PC-3 (cell line): ENCODE measurements at regions of chr14 and their contacts with region 1.

Region 1: GRCh38 chr14:54867011-54867410 is 35.6 kb downstream of the GCH1 start:
- DNase-seq: no peak
- ATAC-seq: no peak
- H3K4me3 ChIP-seq: no peak overlapping the region
- H3K27ac ChIP-seq: no peak overlapping the region
- H3K4me1 ChIP-seq: peaks cover 14% of the 10 kb centered on the region
- H3K27me3 ChIP-seq: no peaks in the 10 kb centered on the region
- CTCF ChIP-seq: no peak

Region 2: GRCh38 chr14:54893151-54893760 is 26.2 kb after region 1 on chr14:
- CTCF ChIA-PET with region 1: no interaction called
- POLR2A ChIA-PET with region 1: no interaction called
- intact Hi-C with region 1: loop called (anchors 1 kb)
- DNase-seq: peak; percentile 99
- ATAC-seq: peak; percentile 65
- H3K4me3 ChIP-seq: no peak overlapping the region
- H3K27ac ChIP-seq: no peak overlapping the region
- H3K4me1 ChIP-seq: peaks cover 9% of the 10 kb centered on the region; the same call in 1 of the 2 replicates
- H3K27me3 ChIP-seq: no peaks in the 10 kb centered on the region
- CTCF ChIP-seq: peak; percentile 97

Region 3: DNA sequence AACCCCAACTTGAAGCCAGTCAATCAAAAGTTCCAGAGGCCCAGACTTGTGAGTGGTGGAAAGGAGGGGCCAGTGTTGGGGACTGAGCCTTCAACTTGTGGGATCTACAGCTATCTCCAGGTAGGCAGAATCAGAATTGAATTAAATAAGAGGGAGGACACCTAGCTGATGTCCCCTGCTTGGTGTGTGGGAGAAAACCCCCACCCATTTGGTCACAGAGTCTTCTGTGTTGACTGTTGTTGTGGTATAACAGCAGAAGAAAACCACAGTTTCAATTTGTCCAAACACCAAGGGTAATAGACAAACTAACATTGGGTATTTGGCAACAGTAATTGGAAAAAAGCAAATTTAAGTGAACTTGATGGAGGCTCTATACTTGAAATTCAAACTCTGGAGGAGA is 39.1 kb after region 1 on chr14:
- CTCF ChIA-PET with region 1: no interaction called
- POLR2A ChIA-PET with region 1: no interaction called
- intact Hi-C with region 1: no loop called
- DNase-seq: no peak
- ATAC-seq: no peak
- H3K4me3 ChIP-seq: no peak overlapping the region
- H3K27ac ChIP-seq: no peak overlapping the region
- H3K4me1 ChIP-seq: peaks cover 2% of the 10 kb centered on the region
- H3K27me3 ChIP-seq: no peaks in the 10 kb centered on the region
- CTCF ChIP-seq: no peak